SK-N-SH (cell line): ENCODE measurements at regions of chr11 and their contacts with region 1.

Region 1: DNA sequence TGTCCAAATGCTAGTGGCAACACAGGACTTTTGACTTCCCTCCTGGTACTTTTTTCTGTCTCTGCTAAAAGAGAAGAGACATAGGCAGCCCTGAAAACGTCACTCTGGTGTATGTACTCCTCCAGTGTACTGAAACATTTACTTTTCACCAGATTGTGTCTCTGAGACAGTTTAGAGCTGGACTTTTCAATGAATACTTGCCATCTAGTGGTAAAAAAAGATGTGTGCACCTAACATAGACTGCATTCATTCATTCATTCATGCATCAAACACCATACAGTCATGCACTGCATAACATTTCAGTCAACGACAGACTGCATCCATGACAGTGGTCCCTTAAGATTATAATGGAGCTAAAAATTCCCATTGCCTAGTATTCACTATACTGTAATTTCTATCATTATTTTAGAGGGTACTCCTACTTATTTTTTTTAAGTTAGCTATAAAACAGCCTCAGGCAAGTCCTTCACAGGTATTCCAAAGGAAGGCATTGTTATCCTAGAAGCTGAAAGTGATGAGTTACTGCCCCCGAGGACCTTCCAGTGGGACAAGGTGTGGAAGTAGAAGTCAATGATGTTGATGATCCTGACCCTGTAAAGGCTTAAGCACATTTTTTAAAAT is 186.2 kb downstream of the SPON1 start:
- DNase-seq: no peak
- H3K4me3 ChIP-seq: no peak overlapping the region
- H3K27ac ChIP-seq: no peak overlapping the region
- H3K4me1 ChIP-seq: peaks cover 0 to 10% of the 10 kb centered on the region in 2 experiments; a peak in 2 of 4 replicates
- H3K27me3 ChIP-seq: no peaks in the 10 kb centered on the region
- CTCF ChIP-seq: peak; percentile 62
- EP300 ChIP-seq: no peak
- RAD21 ChIP-seq: peak; percentile 70

Region 2: GRCh38 chr11:13831696-13832095 is 317.1 kb before region 1 on chr11:
- CTCF ChIA-PET with region 1: no interaction called
- POLR2A ChIA-PET with region 1: no interaction called
- DNase-seq: no peak
- H3K4me3 ChIP-seq: no peak overlapping the region
- H3K27ac ChIP-seq: no peak overlapping the region
- H3K4me1 ChIP-seq: no peaks in the 10 kb centered on the region; a peak in 1 of 4 replicates
- H3K27me3 ChIP-seq: no peaks in the 10 kb centered on the region
- CTCF ChIP-seq: no peak
- EP300 ChIP-seq: no peak
- RAD21 ChIP-seq: no peak

Region 3: GRCh38 chr11:14249121-14249963 is 100.6 kb after region 1 on chr11:
- CTCF ChIA-PET with region 1: interaction called, 10 read pairs
- POLR2A ChIA-PET with region 1: no interaction called
- DNase-seq: peak; percentile 66
- H3K4me3 ChIP-seq: no peak overlapping the region
- H3K27ac ChIP-seq: no peak overlapping the region
- H3K4me1 ChIP-seq: peaks cover 0 to 17% of the 10 kb centered on the region in 2 experiments; a peak in 1 of 4 replicates
- H3K27me3 ChIP-seq: peaks cover 20% of the 10 kb centered on the region; the same call in 1 of the 2 replicates
- CTCF ChIP-seq: peak; percentile 93
- EP300 ChIP-seq: no peak
- RAD21 ChIP-seq: peak; percentile 97